Dendritic cell treated with granulocyte-macrophage colony-stimulating factor and Interleukin-4, amounts not matched to agents 40 ng/mL and 50 ng/mL, for 4 days (primary cell): ENCODE measurements at regions of chr9 and their contacts with region 1.

Region 1: DNA sequence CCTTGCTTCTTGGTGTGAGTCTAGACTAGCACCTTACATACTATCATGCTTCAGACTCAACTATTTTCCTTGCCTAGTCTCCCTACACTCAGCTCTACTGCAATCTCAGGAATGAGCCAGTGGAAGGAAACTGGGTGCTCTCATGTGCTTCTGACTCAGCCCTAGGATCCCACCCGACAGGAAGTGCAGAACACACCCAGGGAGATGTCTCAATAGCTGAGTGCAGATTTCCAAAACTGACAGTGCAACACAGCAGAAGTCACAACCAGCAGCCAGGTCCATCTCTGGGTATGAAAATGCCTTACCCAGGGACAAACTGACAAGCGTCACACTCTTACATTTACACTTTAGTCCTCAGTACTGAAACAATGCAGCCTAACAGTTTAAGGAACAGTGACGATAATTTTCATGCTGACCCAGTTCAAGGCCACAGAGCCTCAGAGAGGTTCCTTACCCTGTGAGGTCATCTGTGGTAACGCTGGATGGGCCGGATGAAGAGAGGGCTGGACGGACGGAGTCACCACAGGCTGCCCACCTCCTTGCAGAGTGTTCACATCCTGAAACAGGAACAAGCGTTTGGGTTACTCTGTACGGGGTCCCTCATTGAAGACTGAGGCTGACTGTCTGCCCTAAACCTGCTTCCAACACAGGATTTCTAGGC is 33.0 kb downstream of the FKBP15 start:
- H3K4me3 Mint-ChIP-seq: peak overlapping the region; percentile 73
- H3K27ac Mint-ChIP-seq: peak overlapping the region; percentile 89
- H3K4me1 Mint-ChIP-seq: peaks cover 66% of the 10 kb centered on the region
- H3K27me3 Mint-ChIP-seq: no peaks in the 10 kb centered on the region

Region 2: DNA sequence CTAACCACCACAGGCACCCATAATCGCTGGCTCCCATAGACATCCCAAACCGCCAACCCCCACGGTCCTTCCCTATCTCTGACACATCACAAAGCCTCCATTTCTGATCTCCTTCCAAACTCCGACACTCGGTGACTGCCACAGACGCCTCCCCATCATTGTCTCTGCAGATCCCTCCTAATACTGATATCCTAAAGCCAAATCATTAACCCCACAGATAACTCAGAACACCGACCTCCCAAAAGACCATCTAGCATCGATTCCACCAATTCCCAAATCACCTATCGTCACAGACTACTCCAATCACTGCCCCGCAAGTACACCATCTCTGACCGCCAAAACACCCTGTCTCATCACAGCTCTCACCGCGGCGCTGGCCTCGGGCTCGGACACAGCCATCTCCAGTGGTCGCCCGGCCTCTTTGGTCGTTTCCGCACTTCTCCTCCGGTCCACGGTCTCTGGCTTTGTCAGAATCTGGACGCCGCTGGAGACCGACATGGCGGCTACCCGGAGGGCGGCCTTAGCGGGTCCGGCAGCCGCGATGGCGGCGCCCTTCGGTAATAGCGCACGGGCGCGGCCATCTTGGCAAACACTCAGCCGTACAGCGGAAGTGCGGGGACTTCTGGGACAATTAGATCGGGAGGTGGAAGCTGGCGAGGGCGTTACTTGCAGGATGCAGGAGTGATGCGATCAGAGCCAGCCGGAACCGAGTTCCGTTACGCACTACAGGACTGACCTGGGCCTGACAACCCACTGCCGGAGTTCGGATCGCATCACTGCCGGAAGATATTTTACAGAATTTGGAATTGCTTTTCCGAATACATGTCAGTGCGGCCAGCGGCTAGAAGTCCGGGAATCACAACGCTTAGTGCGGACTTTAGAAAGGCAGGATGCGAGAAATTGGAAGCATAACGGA is 131.6 kb before region 1 on chr9 and contains the start of gene ZFP37:
- intact Hi-C with region 1: no loop called
- H3K4me3 Mint-ChIP-seq: no peak within 1 kb of the TSS
- H3K27ac Mint-ChIP-seq: no peak within 1 kb of the TSS
- H3K4me1 Mint-ChIP-seq: no peaks in the 10 kb centered on the region
- H3K27me3 Mint-ChIP-seq: peaks cover 14% of the 10 kb centered on the region

Region 3: GRCh38 chr9:113150670-113151611 is 37.1 kb before region 1 on chr9 and contains the start of gene SLC31A2:
- intact Hi-C with region 1: loop called (anchors 5 kb)
- H3K4me3 Mint-ChIP-seq: peak within 1 kb of the TSS; percentile 90
- H3K27ac Mint-ChIP-seq: peak within 1 kb of the TSS; percentile 99
- H3K4me1 Mint-ChIP-seq: peaks cover 63% of the 10 kb centered on the region
- H3K27me3 Mint-ChIP-seq: peaks cover 1% of the 10 kb centered on the region

Region 4: DNA sequence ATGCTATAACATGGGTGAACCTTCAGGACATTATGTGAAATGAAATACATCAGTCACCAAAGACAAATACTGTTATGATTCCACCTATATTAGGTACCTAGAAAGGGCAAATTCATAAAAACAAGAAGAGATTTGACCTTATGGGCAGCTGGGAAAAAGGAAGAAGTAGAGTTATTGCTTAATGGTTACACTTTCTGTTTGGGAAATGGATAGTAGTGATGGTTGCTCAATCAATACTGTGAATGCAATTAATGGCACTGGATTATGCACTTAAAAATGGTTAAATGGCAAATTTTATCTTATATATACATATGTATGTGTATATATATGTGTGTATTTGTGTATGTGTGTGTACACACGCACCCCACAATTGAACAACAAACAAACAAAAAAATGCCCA is 17.8 kb after region 1 on chr9:
- intact Hi-C with region 1: loop called (anchors 1 kb)
- H3K4me3 Mint-ChIP-seq: no peak overlapping the region
- H3K27ac Mint-ChIP-seq: no peak overlapping the region
- H3K4me1 Mint-ChIP-seq: peaks cover 51% of the 10 kb centered on the region
- H3K27me3 Mint-ChIP-seq: no peaks in the 10 kb centered on the region